ENCODE measurements at regions of chr1 and their contacts with region 1.

Region 1: GRCh38 chr1:192516776-192517297 is 58.7 kb upstream of the RGS1 start:
- DNase-seq: peak in 13 of 14 experiments; percentile 19 to 95 (median 32)
- ATAC-seq: peak; percentile 91
- H3K4me3 ChIP-seq: peak overlapping the region; percentile 17
- H3K4me3 Mint-ChIP-seq: peak overlapping the region; percentile 73
- H3K27ac ChIP-seq: peak overlapping the region in 1 of 2 donors; percentile 49
- H3K27ac Mint-ChIP-seq: peak overlapping the region; percentile 87
- H3K4me1 ChIP-seq: peaks cover 18% of the 10 kb centered on the region
- H3K4me1 Mint-ChIP-seq: peaks cover 45% of the 10 kb centered on the region
- H3K27me3 ChIP-seq: no peaks in the 10 kb centered on the region
- H3K27me3 Mint-ChIP-seq: no peaks in the 10 kb centered on the region
- CTCF ChIP-seq: no peak

Region 2: DNA sequence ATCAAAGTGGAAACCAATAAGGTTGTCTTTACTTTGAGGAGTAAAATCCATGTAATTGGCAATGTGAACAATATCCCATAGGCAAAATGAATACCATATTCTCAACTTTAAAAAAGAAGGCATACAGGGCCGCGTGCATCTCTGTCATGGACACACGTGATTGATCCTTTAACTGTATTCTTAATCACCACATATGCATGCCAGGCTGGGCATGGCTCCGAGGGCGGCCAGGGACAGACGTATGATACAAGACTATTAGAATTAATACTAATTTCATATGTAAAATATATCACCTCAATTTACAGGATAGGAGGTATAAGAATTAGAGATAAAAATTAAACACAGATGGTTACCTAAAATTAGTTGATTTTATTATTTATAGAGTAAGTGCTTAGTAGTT is 188.8 kb before region 1 on chr1:
- CTCF ChIA-PET with region 1: no interaction called
- POLR2A ChIA-PET with region 1: no interaction called
- intact Hi-C with region 1: no loop called
- DNase-seq: no peak
- ATAC-seq: no peak
- H3K4me3 ChIP-seq: no peak overlapping the region
- H3K4me3 Mint-ChIP-seq: no peak overlapping the region
- H3K27ac ChIP-seq: no peak overlapping the region
- H3K27ac Mint-ChIP-seq: no peak overlapping the region
- H3K4me1 ChIP-seq: no peaks in the 10 kb centered on the region
- H3K4me1 Mint-ChIP-seq: no peaks in the 10 kb centered on the region
- H3K27me3 ChIP-seq: no peaks in the 10 kb centered on the region
- H3K27me3 Mint-ChIP-seq: no peaks in the 10 kb centered on the region
- CTCF ChIP-seq: no peak

Region 3: DNA sequence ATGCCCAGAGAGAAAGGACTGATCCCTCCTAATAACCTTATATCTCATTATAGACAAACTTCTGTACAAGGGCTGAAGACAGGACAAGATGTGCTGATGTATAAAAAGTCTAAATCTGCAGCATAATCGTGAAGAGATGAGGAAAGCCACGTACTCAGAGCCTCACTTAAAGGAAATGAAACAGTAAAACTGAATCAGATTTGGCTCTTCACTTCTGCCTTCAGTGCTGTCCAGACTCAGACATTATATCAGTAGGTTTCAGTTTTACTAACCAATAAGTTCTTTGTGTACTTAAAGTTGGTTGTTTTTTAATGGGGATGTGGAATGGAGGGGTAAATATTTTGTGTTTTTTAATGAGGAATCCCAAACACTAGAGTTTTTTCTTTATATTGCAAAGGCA is 13.4 kb after region 1 on chr1:
- CTCF ChIA-PET with region 1: no interaction called
- POLR2A ChIA-PET with region 1: interaction called, 4 read pairs
- intact Hi-C with region 1: loop called in 1 of 2 experiments (anchors 1 kb)
- DNase-seq: peak in 2 of 14 experiments; percentile 35 to 37
- ATAC-seq: no peak
- H3K4me3 ChIP-seq: no peak overlapping the region
- H3K4me3 Mint-ChIP-seq: no peak overlapping the region
- H3K27ac ChIP-seq: no peak overlapping the region
- H3K27ac Mint-ChIP-seq: no peak overlapping the region
- H3K4me1 ChIP-seq: peaks cover 2% of the 10 kb centered on the region
- H3K4me1 Mint-ChIP-seq: peaks cover 20% of the 10 kb centered on the region
- H3K27me3 ChIP-seq: no peaks in the 10 kb centered on the region
- H3K27me3 Mint-ChIP-seq: no peaks in the 10 kb centered on the region
- CTCF ChIP-seq: no peak

Region 4: DNA sequence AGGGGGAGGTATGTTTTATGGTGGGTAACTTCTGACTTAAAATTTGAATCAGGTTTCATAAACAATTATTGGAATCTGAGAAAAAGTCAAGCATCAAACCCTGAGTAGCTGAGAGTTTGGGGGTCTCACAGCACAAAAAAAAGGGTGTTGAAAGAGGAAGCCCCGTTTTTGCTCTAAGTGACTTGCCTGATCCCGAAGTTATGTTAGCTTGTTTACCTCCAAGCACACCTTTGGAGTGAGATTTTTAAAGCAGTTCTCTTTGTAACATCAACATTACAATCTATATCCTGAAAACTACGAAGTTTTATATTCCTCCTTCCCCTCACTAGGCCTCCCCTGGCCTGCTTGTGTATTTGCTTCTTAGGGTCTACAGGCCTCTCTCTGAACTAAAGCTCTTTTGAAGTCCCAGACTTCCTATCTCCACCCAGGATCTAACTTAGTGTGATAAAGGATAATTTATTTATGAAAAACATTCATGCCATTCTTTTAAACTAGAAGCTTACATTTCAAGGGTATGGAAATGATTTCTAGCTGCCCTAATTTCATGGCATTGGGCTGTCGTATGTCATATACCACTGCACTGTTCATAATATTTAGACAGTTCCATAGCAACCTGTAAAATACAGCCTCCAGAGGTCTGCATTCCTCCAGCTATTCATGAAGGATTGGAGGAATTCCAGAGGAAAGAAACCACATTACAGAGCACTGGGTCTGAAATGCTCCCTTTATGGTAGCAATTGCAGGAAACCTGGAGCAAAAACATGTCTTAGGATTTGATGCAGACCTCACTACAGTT is 22.7 kb after region 1 on chr1:
- CTCF ChIA-PET with region 1: interaction called, 3 read pairs
- POLR2A ChIA-PET with region 1: interaction called, 15 read pairs
- intact Hi-C with region 1: loop called (anchors 1 to 2 kb)
- DNase-seq: peak in 2 of 14 experiments; percentile 36 to 42
- ATAC-seq: peak; percentile 34
- H3K4me3 ChIP-seq: no peak overlapping the region
- H3K4me3 Mint-ChIP-seq: no peak overlapping the region
- H3K27ac ChIP-seq: peak overlapping the region in 1 of 2 donors; percentile 37
- H3K27ac Mint-ChIP-seq: peak overlapping the region; percentile 84
- H3K4me1 ChIP-seq: peaks cover 11% of the 10 kb centered on the region
- H3K4me1 Mint-ChIP-seq: peaks cover 51% of the 10 kb centered on the region
- H3K27me3 ChIP-seq: no peaks in the 10 kb centered on the region
- H3K27me3 Mint-ChIP-seq: no peaks in the 10 kb centered on the region
- CTCF ChIP-seq: no peak

Region 5: GRCh38 chr1:192550922-192551534 is 34.2 kb after region 1 on chr1:
- CTCF ChIA-PET with region 1: interaction called, 3 read pairs
- POLR2A ChIA-PET with region 1: interaction called, 5 read pairs
- intact Hi-C with region 1: loop called in 1 of 2 experiments (anchors 5 kb)
- DNase-seq: peak in 4 of 14 experiments; percentile 28 to 55 (median 42)
- ATAC-seq: peak; percentile 74
- H3K4me3 ChIP-seq: no peak overlapping the region
- H3K4me3 Mint-ChIP-seq: peak overlapping the region; percentile 67
- H3K27ac ChIP-seq: no peak overlapping the region
- H3K27ac Mint-ChIP-seq: peak overlapping the region; percentile 76
- H3K4me1 ChIP-seq: peaks cover 15% of the 10 kb centered on the region
- H3K4me1 Mint-ChIP-seq: peaks cover 52% of the 10 kb centered on the region
- H3K27me3 ChIP-seq: no peaks in the 10 kb centered on the region
- H3K27me3 Mint-ChIP-seq: no peaks in the 10 kb centered on the region
- CTCF ChIP-seq: no peak

Region 6: DNA sequence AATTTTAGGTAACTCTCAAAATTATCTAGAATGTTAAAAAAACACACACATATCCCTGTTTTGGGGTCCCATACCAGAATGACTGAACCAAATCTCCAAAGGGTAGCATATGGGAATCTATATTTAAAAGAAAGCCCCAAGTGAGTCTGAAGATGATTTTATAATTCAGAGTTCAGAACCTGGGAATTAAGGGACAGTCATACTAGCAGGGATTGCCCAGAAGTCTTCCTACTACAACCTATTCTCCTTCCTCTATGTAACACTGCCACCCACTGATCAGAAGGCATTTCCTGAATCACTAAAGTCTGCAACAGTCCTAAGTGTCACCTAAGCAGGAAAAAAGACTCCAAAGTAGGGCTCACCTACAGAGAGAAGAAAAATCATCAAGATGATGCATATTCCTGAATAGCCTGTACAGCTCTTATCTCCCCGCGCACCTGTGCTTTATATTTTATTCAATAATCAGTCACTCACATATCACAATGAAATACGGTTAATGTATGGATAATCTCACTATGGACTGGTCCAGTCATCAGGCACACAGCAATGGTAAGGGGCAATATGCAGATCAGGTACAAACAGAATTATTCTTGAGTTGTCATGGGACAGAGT is 63.6 kb after region 1 on chr1:
- CTCF ChIA-PET with region 1: interaction called, 4 read pairs
- POLR2A ChIA-PET with region 1: interaction called, 5 read pairs
- intact Hi-C with region 1: loop called (anchors 1 to 2 kb)
- DNase-seq: peak in 4 of 14 experiments; percentile 36 to 72 (median 60)
- ATAC-seq: peak; percentile 30
- H3K4me3 ChIP-seq: no peak overlapping the region
- H3K4me3 Mint-ChIP-seq: no peak overlapping the region
- H3K27ac ChIP-seq: no peak overlapping the region
- H3K27ac Mint-ChIP-seq: peak overlapping the region; percentile 48
- H3K4me1 ChIP-seq: peaks cover 4% of the 10 kb centered on the region
- H3K4me1 Mint-ChIP-seq: peaks cover 46% of the 10 kb centered on the region
- H3K27me3 ChIP-seq: no peaks in the 10 kb centered on the region
- H3K27me3 Mint-ChIP-seq: no peaks in the 10 kb centered on the region
- CTCF ChIP-seq: peak; percentile 65

Region 7: GRCh38 chr1:192609110-192610079 is 92.6 kb after region 1 on chr1:
- CTCF ChIA-PET with region 1: interaction called, 3 read pairs
- POLR2A ChIA-PET with region 1: interaction called, 7 read pairs
- intact Hi-C with region 1: loop called in 1 of 2 experiments (anchors 1 kb)
- DNase-seq: peak; percentile 26 to 88 (median 48)
- ATAC-seq: peak; percentile 99
- H3K4me3 ChIP-seq: no peak overlapping the region
- H3K4me3 Mint-ChIP-seq: peak overlapping the region; percentile 52
- H3K27ac ChIP-seq: no peak overlapping the region
- H3K27ac Mint-ChIP-seq: peak overlapping the region; percentile 67
- H3K4me1 ChIP-seq: peaks cover 11% of the 10 kb centered on the region
- H3K4me1 Mint-ChIP-seq: peaks cover 16% of the 10 kb centered on the region
- H3K27me3 ChIP-seq: no peaks in the 10 kb centered on the region
- H3K27me3 Mint-ChIP-seq: no peaks in the 10 kb centered on the region
- CTCF ChIP-seq: no peak

Measured in CD4-positive, alpha-beta T cell (primary cell).